Activated T-helper 2 cell treated with anti-CD3 and anti-CD28 coated beads, Interferon-gamma antibody, Interleukin-2, Interleukin-4, amounts not matched to agents 10 μg/mL and 5 μg/mL and 100 μg/mL, durations not matched to agents 14 hours and 24 hours and 36 hours (primary cell): ENCODE measurements at regions of chr3 and their contacts with region 1.

Region 1: DNA sequence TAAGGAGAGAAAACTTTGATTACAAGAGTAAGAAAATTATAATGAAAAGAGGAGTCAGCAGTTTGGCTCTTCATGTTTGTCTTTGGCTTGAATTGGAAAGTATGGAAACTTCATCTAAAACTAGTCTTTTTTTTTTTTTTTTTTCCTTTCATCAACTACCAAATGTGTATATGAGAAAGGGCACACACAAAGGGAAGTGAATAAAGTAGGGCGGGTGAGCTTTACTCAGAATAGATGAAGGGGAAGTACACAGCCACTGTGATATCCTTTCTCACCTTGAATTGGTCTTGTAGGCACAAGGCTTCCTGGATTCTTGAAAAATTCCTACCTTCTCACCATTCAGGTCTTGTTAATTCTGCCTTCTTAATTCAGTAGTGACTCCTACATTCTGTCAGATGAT is 652.3 kb upstream of the KCNMB2 start:
- DNase-seq: no peak
- H3K4me3 Mint-ChIP-seq: no peak overlapping the region
- H3K27ac Mint-ChIP-seq: no peak overlapping the region
- H3K4me1 Mint-ChIP-seq: peaks cover 8% of the 10 kb centered on the region
- H3K27me3 Mint-ChIP-seq: no peaks in the 10 kb centered on the region

Region 2: DNA sequence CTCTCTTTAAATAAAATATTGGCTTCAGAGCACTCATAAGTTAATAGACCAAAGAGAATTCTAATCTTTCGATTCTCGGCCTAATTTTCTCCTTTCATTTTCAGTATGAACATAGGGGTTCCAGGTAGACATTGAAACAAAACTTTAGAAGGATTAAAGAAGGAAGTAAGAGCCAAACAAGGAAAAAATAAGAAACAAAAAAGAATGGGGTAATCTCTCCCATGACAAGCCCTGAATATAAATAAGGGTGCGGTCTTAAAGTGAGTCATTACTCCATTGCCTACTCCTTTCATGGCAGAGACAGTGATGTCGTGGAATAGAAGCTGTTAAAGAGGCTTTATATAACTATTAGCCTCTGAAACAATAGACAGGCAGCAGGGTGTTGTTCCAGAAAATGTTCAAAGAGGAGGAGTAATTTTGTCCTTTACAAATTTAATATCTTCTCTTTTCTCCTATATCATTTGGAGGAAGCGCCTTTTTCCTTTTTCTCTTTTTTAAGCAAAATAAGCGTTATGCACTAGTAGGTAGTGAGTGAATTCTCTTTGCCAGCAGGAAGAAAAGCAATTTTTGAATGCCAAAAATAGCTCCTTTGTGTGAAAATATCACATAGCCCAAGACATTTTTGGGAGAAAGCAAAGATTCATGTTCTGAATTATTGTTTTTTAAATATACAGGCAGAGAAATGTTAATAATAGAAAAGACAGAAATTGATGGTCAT is 44.4 kb after region 1 on chr3:
- intact Hi-C with region 1: loop called (anchors 5 kb)
- DNase-seq: no peak
- H3K4me3 Mint-ChIP-seq: no peak overlapping the region
- H3K27ac Mint-ChIP-seq: no peak overlapping the region
- H3K4me1 Mint-ChIP-seq: no peaks in the 10 kb centered on the region
- H3K27me3 Mint-ChIP-seq: no peaks in the 10 kb centered on the region